Panc1 (cell line): ENCODE measurements at regions of chr5 and their contacts with region 1.

Region 1: GRCh38 chr5:91850031-91850430 is 466.9 kb upstream of the ARRDC3 start:
- DNase-seq: no peak
- ATAC-seq: no peak
- H3K4me3 ChIP-seq: no peak overlapping the region
- H3K27ac ChIP-seq: no peak overlapping the region
- H3K4me1 ChIP-seq: no peaks in the 10 kb centered on the region
- H3K27me3 ChIP-seq: no peaks in the 10 kb centered on the region
- CTCF ChIP-seq: no peak

Region 2: GRCh38 chr5:91864962-91865361 is 14.9 kb after region 1 on chr5:
- CTCF ChIA-PET with region 1: interaction called, 10 read pairs
- POLR2A ChIA-PET with region 1: no interaction called
- in situ Hi-C with region 1: no loop called
- intact Hi-C with region 1: no loop called
- DNase-seq: no peak
- ATAC-seq: no peak
- H3K4me3 ChIP-seq: no peak overlapping the region
- H3K27ac ChIP-seq: peak overlapping the region; percentile 46; the same call in 1 of the 2 replicates
- H3K4me1 ChIP-seq: peaks cover 4% of the 10 kb centered on the region; the same call in 1 of the 2 replicates
- H3K27me3 ChIP-seq: no peaks in the 10 kb centered on the region
- CTCF ChIP-seq: peak; percentile 33; the same call in 1 of the 2 replicates

Region 3: DNA sequence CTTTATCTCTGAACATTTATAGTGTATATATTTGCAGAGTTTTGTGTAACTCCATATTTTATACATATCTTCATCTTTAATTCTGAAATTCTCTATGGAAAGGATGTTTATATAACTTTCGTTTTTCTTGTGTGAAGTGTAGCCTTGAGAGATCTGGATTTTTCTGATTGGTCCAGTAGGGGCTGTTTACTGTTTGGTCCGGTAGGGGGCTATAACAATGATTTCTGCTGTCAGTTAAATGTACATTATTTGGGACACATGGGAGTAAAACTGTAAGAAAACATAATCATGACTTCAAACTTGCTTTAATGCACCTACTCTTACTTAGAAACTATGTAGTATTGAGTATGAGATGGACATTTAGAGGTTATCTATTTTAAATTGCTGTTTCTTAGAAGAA is 60.2 kb after region 1 on chr5:
- CTCF ChIA-PET with region 1: no interaction called
- POLR2A ChIA-PET with region 1: no interaction called
- in situ Hi-C with region 1: no loop called
- intact Hi-C with region 1: no loop called
- DNase-seq: no peak
- ATAC-seq: no peak
- H3K4me3 ChIP-seq: no peak overlapping the region
- H3K27ac ChIP-seq: no peak overlapping the region
- H3K4me1 ChIP-seq: no peaks in the 10 kb centered on the region
- H3K27me3 ChIP-seq: no peaks in the 10 kb centered on the region
- CTCF ChIP-seq: no peak; the same call in 1 of the 2 replicates